Natural killer cell (primary cell): ENCODE measurements at regions of chr11 and their contacts with region 1.

Region 1: DNA sequence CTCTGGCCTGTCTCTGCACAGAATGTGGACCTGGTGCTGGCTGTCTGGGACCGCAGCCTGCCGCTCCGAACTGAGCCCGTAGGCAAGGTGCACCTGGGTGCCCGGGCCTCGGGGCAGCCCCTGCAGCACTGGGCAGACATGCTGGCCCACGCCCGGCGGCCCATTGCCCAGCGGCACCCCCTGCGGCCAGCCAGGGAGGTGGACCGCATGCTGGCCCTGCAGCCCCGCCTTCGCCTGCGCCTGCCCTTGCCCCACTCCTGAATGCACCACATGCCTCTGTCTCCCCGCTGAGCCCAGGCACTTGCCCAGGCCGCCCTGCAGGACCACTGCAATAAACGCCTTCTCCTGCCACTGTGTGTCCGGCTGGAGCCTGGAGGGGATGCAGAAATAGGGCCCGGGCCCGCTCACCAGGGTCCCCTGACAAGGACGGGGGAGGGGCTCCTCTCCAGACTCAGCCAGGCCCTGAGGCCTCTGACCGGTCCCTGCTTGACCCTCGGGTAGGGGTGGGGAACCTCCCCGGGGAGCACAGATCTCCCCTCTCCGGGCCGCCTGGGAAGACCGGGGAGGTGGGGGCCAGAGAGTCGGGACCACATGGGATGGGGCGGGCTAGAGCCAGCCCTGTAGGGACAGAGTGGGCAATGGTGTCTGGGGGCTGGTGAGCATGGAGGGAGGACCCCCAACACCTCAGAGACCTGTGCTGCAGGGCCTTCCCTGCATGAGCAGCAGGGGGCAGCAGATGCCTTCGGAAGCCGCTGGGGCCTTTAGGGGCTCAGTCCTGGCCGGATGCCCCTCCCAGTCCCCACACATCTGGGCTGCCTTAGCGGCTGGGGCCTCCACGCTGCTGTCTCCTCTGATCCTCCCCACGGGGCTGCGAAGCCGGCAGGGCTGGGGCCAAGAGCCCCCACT is 1.4 kb upstream of the TNNI2 start:
- DNase-seq: peak; percentile 80 to 91
- ATAC-seq: peak; percentile 89 to 96 (median 92)
- H3K4me3 ChIP-seq: no peak overlapping the region
- H3K4me3 Mint-ChIP-seq: no peak overlapping the region
- H3K27ac ChIP-seq: no peak overlapping the region
- H3K27ac Mint-ChIP-seq: no peak overlapping the region
- H3K4me1 ChIP-seq: peaks cover 54% of the 10 kb centered on the region
- H3K4me1 Mint-ChIP-seq: peaks cover 0 to 20% of the 10 kb centered on the region in 2 donors
- H3K27me3 ChIP-seq: no peaks in the 10 kb centered on the region
- H3K27me3 Mint-ChIP-seq: peaks cover 0 to 6% of the 10 kb centered on the region in 2 donors
- CTCF ChIP-seq: peak; percentile 98

Region 2: DNA sequence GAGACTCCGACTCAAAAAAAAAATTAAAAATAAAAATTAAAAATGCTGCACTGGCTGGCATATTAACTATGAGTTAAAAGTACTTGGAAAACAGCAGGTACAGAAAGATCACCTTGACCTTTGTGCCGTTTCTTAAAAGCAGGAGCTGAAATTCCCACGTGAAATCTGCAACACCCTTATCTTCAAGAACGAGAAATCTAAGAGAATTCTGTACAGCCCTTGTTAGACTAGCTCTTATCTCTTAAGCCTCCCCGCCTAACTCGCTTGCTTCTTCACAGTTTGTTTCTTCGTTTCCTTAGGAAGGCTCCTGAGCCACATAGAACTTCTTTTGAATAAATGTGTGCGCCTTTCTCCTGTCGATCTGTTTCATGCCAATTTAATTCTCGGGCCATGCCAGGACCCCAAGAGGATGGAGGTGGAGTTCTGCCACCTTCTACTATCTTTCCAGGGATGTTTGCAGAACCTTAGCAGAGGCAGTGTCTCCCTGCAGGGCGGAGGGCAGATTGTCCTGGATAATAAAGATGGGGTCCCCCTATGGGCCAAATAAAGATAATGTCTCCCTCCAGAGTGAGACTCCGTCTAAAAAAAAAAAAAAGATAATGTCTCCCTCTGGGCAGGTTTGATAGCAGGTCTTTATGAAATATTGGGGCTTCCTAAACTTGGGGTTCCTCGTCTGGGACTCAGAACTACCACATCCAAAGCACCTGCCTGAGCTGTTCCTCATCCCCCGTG is 30.0 kb before region 1 on chr11:
- intact Hi-C with region 1: no loop called
- DNase-seq: no peak
- ATAC-seq: no peak
- H3K4me3 ChIP-seq: no peak overlapping the region
- H3K4me3 Mint-ChIP-seq: no peak overlapping the region
- H3K27ac ChIP-seq: no peak overlapping the region
- H3K27ac Mint-ChIP-seq: no peak overlapping the region
- H3K4me1 ChIP-seq: no peaks in the 10 kb centered on the region
- H3K4me1 Mint-ChIP-seq: no peaks in the 10 kb centered on the region
- H3K27me3 ChIP-seq: no peaks in the 10 kb centered on the region
- H3K27me3 Mint-ChIP-seq: peaks cover 2 to 19% of the 10 kb centered on the region in 2 donors
- CTCF ChIP-seq: peak; percentile 13

Region 3: DNA sequence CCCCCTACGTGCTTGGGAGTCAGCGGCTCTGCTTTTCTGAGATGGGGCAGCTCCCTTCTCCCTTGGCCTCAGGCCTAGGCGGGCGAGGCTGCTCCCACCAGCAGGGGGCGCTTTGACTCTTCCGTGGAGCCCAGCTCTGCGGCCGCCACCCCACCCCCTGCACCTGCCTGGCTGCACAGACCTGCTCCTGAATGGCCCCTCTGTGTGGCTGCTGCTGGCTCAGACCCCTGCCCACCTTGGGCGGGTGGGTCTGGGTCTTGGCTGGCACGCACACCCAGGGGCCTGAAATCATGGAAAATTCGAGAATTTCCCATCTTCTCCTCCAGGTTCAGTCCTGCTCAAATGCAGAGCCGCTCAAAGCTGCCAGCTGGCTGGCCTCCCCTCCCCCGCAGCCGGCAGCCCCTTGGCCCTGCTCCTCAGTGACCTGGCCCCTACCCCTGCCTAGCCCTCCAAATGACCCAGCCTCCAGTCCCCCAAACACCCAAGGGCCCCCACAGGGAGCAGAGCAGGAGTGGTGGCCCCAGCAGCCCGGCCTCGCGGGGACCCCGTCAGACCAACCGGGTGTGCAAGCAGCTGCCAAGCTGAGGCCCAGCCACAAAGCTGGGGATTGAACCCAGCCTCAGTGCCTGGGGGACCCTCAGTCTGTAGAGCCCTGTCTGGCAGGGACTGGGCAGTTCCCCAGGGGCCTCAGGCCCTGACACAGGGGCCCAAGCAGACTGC is 45.3 kb after region 1 on chr11:
- intact Hi-C with region 1: loop called (anchors 1 kb)
- DNase-seq: peak; percentile 77 to 90
- ATAC-seq: peak; percentile 81 to 88 (median 87)
- H3K4me3 ChIP-seq: no peak overlapping the region
- H3K4me3 Mint-ChIP-seq: no peak overlapping the region
- H3K27ac ChIP-seq: no peak overlapping the region
- H3K27ac Mint-ChIP-seq: peak overlapping the region in 1 of 2 donors; percentile 80
- H3K4me1 ChIP-seq: peaks cover 58% of the 10 kb centered on the region
- H3K4me1 Mint-ChIP-seq: peaks cover 9 to 47% of the 10 kb centered on the region in 2 donors
- H3K27me3 ChIP-seq: no peaks in the 10 kb centered on the region
- H3K27me3 Mint-ChIP-seq: no peaks in the 10 kb centered on the region
- CTCF ChIP-seq: peak; percentile 83

Region 4: DNA sequence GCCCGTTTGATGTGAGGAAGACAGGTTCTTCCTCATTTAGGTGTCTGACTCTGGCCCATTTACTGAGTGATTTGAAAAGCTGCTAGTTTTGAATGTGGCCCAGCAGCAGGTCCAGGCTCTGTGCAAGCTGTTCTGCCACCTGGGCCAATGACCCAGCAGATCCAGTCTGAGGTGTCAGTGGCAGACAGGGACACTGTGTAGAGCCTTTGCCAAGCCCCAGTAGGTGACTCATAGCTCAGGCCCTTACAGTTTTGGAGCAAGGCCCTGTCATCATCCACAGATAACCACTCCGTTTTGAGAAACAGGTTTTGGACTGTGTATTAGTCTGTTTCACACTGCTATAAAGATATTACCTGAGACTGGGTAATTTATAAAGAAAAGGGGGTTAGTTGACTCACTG is 488.3 kb after region 1 on chr11:
- intact Hi-C with region 1: no loop called
- DNase-seq: no peak
- ATAC-seq: no peak
- H3K4me3 ChIP-seq: no peak overlapping the region
- H3K4me3 Mint-ChIP-seq: no peak overlapping the region
- H3K27ac ChIP-seq: no peak overlapping the region
- H3K27ac Mint-ChIP-seq: no peak overlapping the region
- H3K4me1 ChIP-seq: no peaks in the 10 kb centered on the region
- H3K4me1 Mint-ChIP-seq: peaks cover 0 to 6% of the 10 kb centered on the region in 2 donors
- H3K27me3 ChIP-seq: peaks cover 7% of the 10 kb centered on the region
- H3K27me3 Mint-ChIP-seq: peaks cover 15 to 59% of the 10 kb centered on the region in 2 donors
- CTCF ChIP-seq: no peak